Caco-2 (cell line): ENCODE measurements at regions of chr10 and their contacts with region 1.

Region 1: GRCh38 chr10:28939281-28940157 is 262.2 kb downstream of the BAMBI start:
- DNase-seq: peak; percentile 99 to 100
- H3K4me3 ChIP-seq: peak overlapping the region; percentile 35
- H3K4me3 Mint-ChIP-seq: peak overlapping the region; percentile 75
- H3K27ac Mint-ChIP-seq: peak overlapping the region; percentile 88
- H3K4me1 ChIP-seq: peaks cover 30% of the 10 kb centered on the region
- H3K4me1 Mint-ChIP-seq: peaks cover 45% of the 10 kb centered on the region
- H3K27me3 ChIP-seq: no peaks in the 10 kb centered on the region
- H3K27me3 Mint-ChIP-seq: no peaks in the 10 kb centered on the region
- CTCF ChIP-seq: peak; percentile 90 to 97

Region 2: GRCh38 chr10:28676968-28677887 is 262.3 kb before region 1 on chr10 and contains the start of gene BAMBI:
- CTCF ChIA-PET with region 1: interaction called, 8 read pairs
- POLR2A ChIA-PET with region 1: no interaction called
- intact Hi-C with region 1: loop called (anchors 1 kb)
- DNase-seq: peak; percentile 93 to 100
- H3K4me3 ChIP-seq: peak within 1 kb of the TSS; percentile 90
- H3K4me3 Mint-ChIP-seq: peak within 1 kb of the TSS; percentile 99
- H3K27ac Mint-ChIP-seq: peak within 1 kb of the TSS; percentile 85
- H3K4me1 ChIP-seq: peaks cover 47% of the 10 kb centered on the region
- H3K4me1 Mint-ChIP-seq: peaks cover 26% of the 10 kb centered on the region
- H3K27me3 ChIP-seq: no peaks in the 10 kb centered on the region
- H3K27me3 Mint-ChIP-seq: no peaks in the 10 kb centered on the region
- CTCF ChIP-seq: peak; percentile 72 to 90
- total RNA-seq, gene BAMBI: 146 and 165 TPM in 2 replicates

Region 3: GRCh38 chr10:28906934-28907333 is 32.6 kb before region 1 on chr10:
- CTCF ChIA-PET with region 1: no interaction called
- POLR2A ChIA-PET with region 1: no interaction called
- intact Hi-C with region 1: loop called (anchors 1 kb)
- DNase-seq: no peak
- H3K4me3 ChIP-seq: no peak overlapping the region
- H3K4me3 Mint-ChIP-seq: no peak overlapping the region
- H3K27ac Mint-ChIP-seq: no peak overlapping the region
- H3K4me1 ChIP-seq: peaks cover 36% of the 10 kb centered on the region
- H3K4me1 Mint-ChIP-seq: peaks cover 21% of the 10 kb centered on the region
- H3K27me3 ChIP-seq: no peaks in the 10 kb centered on the region
- H3K27me3 Mint-ChIP-seq: no peaks in the 10 kb centered on the region
- CTCF ChIP-seq: no peak

Region 4: GRCh38 chr10:29050081-29050480 is 110.6 kb after region 1 on chr10:
- CTCF ChIA-PET with region 1: no interaction called
- POLR2A ChIA-PET with region 1: no interaction called
- intact Hi-C with region 1: no loop called
- DNase-seq: no peak
- H3K4me3 ChIP-seq: no peak overlapping the region
- H3K4me3 Mint-ChIP-seq: no peak overlapping the region
- H3K27ac Mint-ChIP-seq: peak overlapping the region; percentile 13
- H3K4me1 ChIP-seq: no peaks in the 10 kb centered on the region
- H3K4me1 Mint-ChIP-seq: peaks cover 8% of the 10 kb centered on the region
- H3K27me3 ChIP-seq: no peaks in the 10 kb centered on the region
- H3K27me3 Mint-ChIP-seq: no peaks in the 10 kb centered on the region
- CTCF ChIP-seq: no peak

Region 5: DNA sequence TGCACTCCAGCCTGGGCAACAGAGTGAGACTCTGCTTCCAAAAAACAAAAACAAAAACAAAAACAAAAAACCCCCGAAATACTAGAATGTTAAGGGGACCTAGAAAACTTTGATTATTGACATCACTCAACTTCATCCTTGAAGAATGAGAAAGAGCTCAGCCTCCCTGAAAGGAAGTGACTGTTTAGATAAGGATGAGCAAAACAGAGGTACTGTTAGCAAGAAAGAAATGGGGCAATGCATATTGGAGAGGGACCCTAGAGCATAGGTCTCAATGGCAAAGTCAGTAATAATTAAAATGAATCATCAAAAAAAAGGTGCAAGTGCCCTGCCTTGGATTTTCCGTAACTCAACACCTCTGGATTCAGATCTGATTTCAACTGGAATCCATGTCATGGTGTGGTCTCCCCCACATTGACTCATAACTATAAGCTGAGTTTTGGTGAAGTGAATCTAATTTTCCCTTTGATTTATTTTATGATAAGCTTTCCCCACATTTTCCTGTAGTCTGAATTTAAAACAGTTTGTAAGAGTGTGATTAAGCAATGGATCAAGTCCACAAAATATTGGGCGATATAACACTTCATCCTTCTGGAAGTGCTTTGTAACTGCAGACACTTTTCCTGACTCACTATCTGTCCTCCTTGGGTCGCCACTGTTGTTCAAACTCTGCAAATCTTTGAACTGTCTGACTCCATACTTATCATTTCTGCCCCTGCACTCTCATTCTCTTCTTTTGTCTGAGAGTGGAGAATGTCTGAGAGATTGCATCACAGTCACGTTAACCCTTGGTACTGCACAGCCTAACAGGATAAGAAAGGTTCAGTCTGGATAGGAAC is 124.5 kb after region 1 on chr10:
- CTCF ChIA-PET with region 1: no interaction called
- POLR2A ChIA-PET with region 1: no interaction called
- intact Hi-C with region 1: loop called (anchors 1 kb)
- DNase-seq: peak; percentile 87 to 89
- H3K4me3 ChIP-seq: 0 out of 2 replicates have a peak overlapping the region, but pooled peaks have one; percentile 14
- H3K4me3 Mint-ChIP-seq: peak overlapping the region; percentile 32
- H3K27ac Mint-ChIP-seq: peak overlapping the region; percentile 68
- H3K4me1 ChIP-seq: peaks cover 60% of the 10 kb centered on the region
- H3K4me1 Mint-ChIP-seq: peaks cover 41% of the 10 kb centered on the region
- H3K27me3 ChIP-seq: no peaks in the 10 kb centered on the region
- H3K27me3 Mint-ChIP-seq: no peaks in the 10 kb centered on the region
- CTCF ChIP-seq: peak; percentile 19 to 47

Region 6: GRCh38 chr10:29131952-29132820 is 192.7 kb after region 1 on chr10:
- CTCF ChIA-PET with region 1: interaction called, 4 read pairs
- POLR2A ChIA-PET with region 1: no interaction called
- intact Hi-C with region 1: loop called (anchors 2 kb)
- DNase-seq: no peak
- H3K4me3 ChIP-seq: no peak overlapping the region
- H3K4me3 Mint-ChIP-seq: no peak overlapping the region
- H3K27ac Mint-ChIP-seq: peak overlapping the region; percentile 51
- H3K4me1 ChIP-seq: peaks cover 33% of the 10 kb centered on the region
- H3K4me1 Mint-ChIP-seq: peaks cover 15% of the 10 kb centered on the region
- H3K27me3 ChIP-seq: no peaks in the 10 kb centered on the region
- H3K27me3 Mint-ChIP-seq: no peaks in the 10 kb centered on the region
- CTCF ChIP-seq: no peak

Region 7: GRCh38 chr10:29304264-29305030 is 364.9 kb after region 1 on chr10:
- CTCF ChIA-PET with region 1: interaction called, 5 read pairs
- POLR2A ChIA-PET with region 1: no interaction called
- intact Hi-C with region 1: loop called (anchors 1 kb)
- DNase-seq: peak; percentile 74 to 86
- H3K4me3 ChIP-seq: no peak overlapping the region
- H3K4me3 Mint-ChIP-seq: peak overlapping the region; percentile 55
- H3K27ac Mint-ChIP-seq: peak overlapping the region; percentile 48
- H3K4me1 ChIP-seq: peaks cover 14% of the 10 kb centered on the region; the same call in 1 of the 2 replicates
- H3K4me1 Mint-ChIP-seq: no peaks in the 10 kb centered on the region
- H3K27me3 ChIP-seq: no peaks in the 10 kb centered on the region
- H3K27me3 Mint-ChIP-seq: no peaks in the 10 kb centered on the region
- CTCF ChIP-seq: peak; percentile 95 to 99